ENCODE measurements at regions of chr6 and their contacts with region 1.

Region 1: DNA sequence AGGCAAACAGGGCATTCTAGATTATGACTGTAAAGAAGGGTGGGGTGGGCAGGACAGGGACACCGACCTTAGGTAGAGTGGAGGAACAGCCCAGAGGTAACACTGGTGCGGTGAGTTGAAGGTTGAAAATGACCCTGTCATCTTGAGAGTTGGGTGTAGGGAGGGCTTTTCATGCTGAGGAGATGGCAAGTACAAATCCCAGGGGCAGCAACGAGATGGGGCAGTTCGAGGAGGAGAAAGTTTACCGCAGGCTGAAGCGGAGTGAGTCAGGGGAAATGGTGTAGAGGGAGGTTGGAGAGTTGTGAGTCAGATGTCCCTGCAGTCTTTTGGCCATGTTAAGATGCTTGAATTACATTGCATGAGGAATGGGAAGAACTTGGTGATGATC is 101.1 kb downstream of the HIVEP1 start:
- DNase-seq: no peak
- ATAC-seq: no peak
- H3K4me3 ChIP-seq: no peak overlapping the region
- H3K4me3 Mint-ChIP-seq: peak overlapping the region in 9 of 10 donors; percentile 5 to 77 (median 14)
- H3K27ac ChIP-seq: no peak overlapping the region
- H3K27ac Mint-ChIP-seq: peak overlapping the region in 8 of 9 donors; percentile 1 to 79 (median 52)
- H3K4me1 ChIP-seq: peaks cover 6 to 40% of the 10 kb centered on the region in 2 donors
- H3K4me1 Mint-ChIP-seq: peaks cover 47 to 79% (median 69%) of the 10 kb centered on the region in 7 donors
- H3K27me3 ChIP-seq: no peaks in the 10 kb centered on the region
- H3K27me3 Mint-ChIP-seq: no peaks in the 10 kb centered on the region

Region 2: GRCh38 chr6:12060780-12061619 is 52.2 kb before region 1 on chr6:
- CTCF ChIA-PET with region 1: no interaction called
- POLR2A ChIA-PET with region 1: interaction called, 3 read pairs
- intact Hi-C with region 1: loop called in 1 of 2 experiments (anchors 2 kb)
- DNase-seq: peak; percentile 44 to 90 (median 76)
- ATAC-seq: peak; percentile 97
- H3K4me3 ChIP-seq: peak overlapping the region; percentile 24
- H3K4me3 Mint-ChIP-seq: peak overlapping the region; percentile 77 to 94 (median 84)
- H3K27ac ChIP-seq: peak overlapping the region; percentile 5
- H3K27ac Mint-ChIP-seq: peak overlapping the region in 8 of 9 donors; percentile 75 to 95 (median 88)
- H3K4me1 ChIP-seq: peaks cover 6 to 10% of the 10 kb centered on the region in 2 donors
- H3K4me1 Mint-ChIP-seq: peaks cover 42 to 78% (median 71%) of the 10 kb centered on the region in 7 donors
- H3K27me3 ChIP-seq: no peaks in the 10 kb centered on the region
- H3K27me3 Mint-ChIP-seq: no peaks in the 10 kb centered on the region

Region 3: GRCh38 chr6:12097791-12098190 is 15.4 kb before region 1 on chr6:
- CTCF ChIA-PET with region 1: no interaction called
- POLR2A ChIA-PET with region 1: interaction called, 3 read pairs
- intact Hi-C with region 1: loop called (anchors 1 to 2 kb)
- DNase-seq: no peak
- ATAC-seq: no peak
- H3K4me3 ChIP-seq: no peak overlapping the region
- H3K4me3 Mint-ChIP-seq: no peak overlapping the region
- H3K27ac ChIP-seq: no peak overlapping the region
- H3K27ac Mint-ChIP-seq: no peak overlapping the region
- H3K4me1 ChIP-seq: peaks cover 0 to 12% of the 10 kb centered on the region in 2 donors
- H3K4me1 Mint-ChIP-seq: peaks cover 15 to 78% (median 64%) of the 10 kb centered on the region in 7 donors
- H3K27me3 ChIP-seq: no peaks in the 10 kb centered on the region
- H3K27me3 Mint-ChIP-seq: no peaks in the 10 kb centered on the region

Region 4: GRCh38 chr6:12126051-12126450 is 12.9 kb after region 1 on chr6:
- CTCF ChIA-PET with region 1: no interaction called
- POLR2A ChIA-PET with region 1: interaction called, 10 read pairs
- intact Hi-C with region 1: no loop called
- DNase-seq: peak in 5 of 9 donors; percentile 42 to 62 (median 52)
- ATAC-seq: peak; percentile 75
- H3K4me3 ChIP-seq: no peak overlapping the region
- H3K4me3 Mint-ChIP-seq: peak overlapping the region in 9 of 10 donors; percentile 44 to 76 (median 63)
- H3K27ac ChIP-seq: no peak overlapping the region
- H3K27ac Mint-ChIP-seq: peak overlapping the region; percentile 16 to 88 (median 70)
- H3K4me1 ChIP-seq: peaks cover 0 to 35% of the 10 kb centered on the region in 2 donors
- H3K4me1 Mint-ChIP-seq: peaks cover 38 to 71% (median 62%) of the 10 kb centered on the region in 7 donors
- H3K27me3 ChIP-seq: no peaks in the 10 kb centered on the region
- H3K27me3 Mint-ChIP-seq: no peaks in the 10 kb centered on the region

Region 5: DNA sequence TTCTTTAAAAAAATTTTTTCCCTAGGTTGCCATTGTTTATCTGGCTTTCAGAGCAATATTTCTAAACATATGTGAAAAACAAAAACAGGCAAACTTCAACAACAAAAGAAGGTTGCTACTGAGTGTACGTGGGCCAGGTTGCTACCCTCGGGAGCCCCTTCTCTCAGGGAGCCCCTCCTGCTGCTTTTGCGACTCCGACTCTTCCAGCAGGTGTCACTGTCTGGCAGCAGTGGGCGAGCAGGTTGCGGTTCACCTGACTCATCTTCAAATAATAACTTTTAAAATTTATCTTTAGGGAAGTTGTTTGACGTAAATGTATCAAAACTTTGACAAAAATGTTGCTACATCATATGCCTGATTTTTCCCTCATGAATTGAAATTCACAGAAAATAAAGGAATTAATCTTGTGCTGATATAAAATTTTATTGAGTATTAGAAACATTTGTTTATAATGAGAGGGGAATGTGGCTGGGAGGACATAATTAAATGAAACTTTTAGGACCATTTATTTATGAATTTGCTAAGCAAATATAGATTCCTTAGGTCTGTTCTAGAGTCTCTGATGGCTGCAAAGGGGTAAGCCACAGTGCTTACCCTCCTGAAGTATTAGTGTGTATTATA is 37.7 kb after region 1 on chr6:
- CTCF ChIA-PET with region 1: no interaction called
- POLR2A ChIA-PET with region 1: no interaction called
- intact Hi-C with region 1: loop called in 1 of 2 experiments (anchors 5 kb)
- DNase-seq: peak in 5 of 9 donors; percentile 16 to 45 (median 35)
- ATAC-seq: no peak
- H3K4me3 ChIP-seq: no peak overlapping the region
- H3K4me3 Mint-ChIP-seq: no peak overlapping the region
- H3K27ac ChIP-seq: no peak overlapping the region
- H3K27ac Mint-ChIP-seq: no peak overlapping the region
- H3K4me1 ChIP-seq: no peaks in the 10 kb centered on the region
- H3K4me1 Mint-ChIP-seq: peaks cover 4 to 29% (median 14%) of the 10 kb centered on the region in 7 donors
- H3K27me3 ChIP-seq: no peaks in the 10 kb centered on the region
- H3K27me3 Mint-ChIP-seq: no peaks in the 10 kb centered on the region